Activated CD8-positive, alpha-beta T cell treated with anti-CD3 and anti-CD28 coated beads, Interleukin-2, amount 10 ng/mL, durations not matched to agents 7 days and 5 days (primary cell): ENCODE measurements at regions of chr1 and their contacts with region 1.

Region 1: DNA sequence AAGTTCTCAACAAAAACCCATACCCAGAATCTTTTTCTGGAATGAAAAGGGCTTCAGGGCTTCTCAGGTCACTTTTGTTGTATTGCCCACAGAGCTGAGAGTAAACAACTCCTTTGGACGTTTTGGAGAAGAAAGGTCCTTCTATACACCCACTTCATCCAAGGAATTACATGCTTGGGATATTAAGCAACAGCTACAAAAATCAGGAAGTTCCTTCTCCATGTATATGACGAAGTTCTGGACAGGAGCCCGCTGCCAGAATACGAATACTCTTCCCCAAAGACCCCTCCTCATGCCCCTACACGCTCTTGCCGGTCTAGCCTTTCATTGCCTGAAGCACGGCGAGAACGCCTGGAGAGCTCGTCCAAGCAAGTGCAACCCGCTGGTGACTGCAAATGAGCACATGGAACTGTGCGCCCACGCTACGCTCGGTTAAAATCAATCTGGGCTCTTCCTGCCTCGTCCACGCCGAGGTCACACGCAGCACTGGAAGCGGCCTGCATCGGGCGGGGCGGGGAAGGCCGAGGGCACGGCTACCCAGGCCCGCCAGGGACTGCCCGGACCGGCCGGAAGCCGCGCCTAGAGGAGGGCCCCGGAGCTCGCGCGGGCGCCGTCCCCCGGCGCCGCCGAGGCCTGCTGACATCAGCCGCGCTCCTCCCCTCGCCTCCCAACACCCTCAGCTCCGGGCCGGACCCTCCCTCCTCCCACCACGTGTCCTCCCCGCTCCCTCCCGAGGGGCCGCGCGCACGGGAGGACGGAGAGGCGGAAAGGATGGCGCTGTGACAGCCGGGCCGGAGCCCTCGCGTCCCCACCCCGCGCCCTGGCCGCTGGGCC is at the start of gene POGK:
- DNase-seq: peak; percentile 88
- ATAC-seq: peak; percentile 97
- H3K4me3 Mint-ChIP-seq: peak within 1 kb of the TSS; percentile 86
- H3K27ac Mint-ChIP-seq: peak within 1 kb of the TSS; percentile 95
- H3K4me1 Mint-ChIP-seq: peaks cover 38% of the 10 kb centered on the region
- H3K27me3 Mint-ChIP-seq: peaks cover 9% of the 10 kb centered on the region
- total RNA-seq, gene POGK: 37.6 to 39.8 TPM

Region 2: GRCh38 chr1:166763318-166763717 is 75.7 kb before region 1 on chr1:
- CTCF ChIA-PET with region 1: no interaction called
- POLR2A ChIA-PET with region 1: no interaction called
- DNase-seq: no peak
- ATAC-seq: no peak
- H3K4me3 Mint-ChIP-seq: no peak overlapping the region
- H3K27ac Mint-ChIP-seq: no peak overlapping the region
- H3K4me1 Mint-ChIP-seq: no peaks in the 10 kb centered on the region
- H3K27me3 Mint-ChIP-seq: peaks cover 2% of the 10 kb centered on the region

Region 3: GRCh38 chr1:166875734-166876539 is 37.0 kb after region 1 on chr1 and contains the start of gene TADA1:
- CTCF ChIA-PET with region 1: interaction called, 3 read pairs
- POLR2A ChIA-PET with region 1: interaction called, 14 read pairs
- DNase-seq: peak; percentile 99
- ATAC-seq: peak; percentile 92
- H3K4me3 Mint-ChIP-seq: peak within 1 kb of the TSS; percentile 98
- H3K27ac Mint-ChIP-seq: peak within 1 kb of the TSS; percentile 99
- H3K4me1 Mint-ChIP-seq: peaks cover 46% of the 10 kb centered on the region
- H3K27me3 Mint-ChIP-seq: peaks cover 4% of the 10 kb centered on the region
- total RNA-seq, gene TADA1: 12.9 to 13.6 TPM